Activated naive CD4-positive, alpha-beta T cell treated with anti-CD3 and anti-CD28 coated beads for 36 hours (primary cell): ENCODE measurements at regions of chr19 and their contacts with region 1.

Region 1: DNA sequence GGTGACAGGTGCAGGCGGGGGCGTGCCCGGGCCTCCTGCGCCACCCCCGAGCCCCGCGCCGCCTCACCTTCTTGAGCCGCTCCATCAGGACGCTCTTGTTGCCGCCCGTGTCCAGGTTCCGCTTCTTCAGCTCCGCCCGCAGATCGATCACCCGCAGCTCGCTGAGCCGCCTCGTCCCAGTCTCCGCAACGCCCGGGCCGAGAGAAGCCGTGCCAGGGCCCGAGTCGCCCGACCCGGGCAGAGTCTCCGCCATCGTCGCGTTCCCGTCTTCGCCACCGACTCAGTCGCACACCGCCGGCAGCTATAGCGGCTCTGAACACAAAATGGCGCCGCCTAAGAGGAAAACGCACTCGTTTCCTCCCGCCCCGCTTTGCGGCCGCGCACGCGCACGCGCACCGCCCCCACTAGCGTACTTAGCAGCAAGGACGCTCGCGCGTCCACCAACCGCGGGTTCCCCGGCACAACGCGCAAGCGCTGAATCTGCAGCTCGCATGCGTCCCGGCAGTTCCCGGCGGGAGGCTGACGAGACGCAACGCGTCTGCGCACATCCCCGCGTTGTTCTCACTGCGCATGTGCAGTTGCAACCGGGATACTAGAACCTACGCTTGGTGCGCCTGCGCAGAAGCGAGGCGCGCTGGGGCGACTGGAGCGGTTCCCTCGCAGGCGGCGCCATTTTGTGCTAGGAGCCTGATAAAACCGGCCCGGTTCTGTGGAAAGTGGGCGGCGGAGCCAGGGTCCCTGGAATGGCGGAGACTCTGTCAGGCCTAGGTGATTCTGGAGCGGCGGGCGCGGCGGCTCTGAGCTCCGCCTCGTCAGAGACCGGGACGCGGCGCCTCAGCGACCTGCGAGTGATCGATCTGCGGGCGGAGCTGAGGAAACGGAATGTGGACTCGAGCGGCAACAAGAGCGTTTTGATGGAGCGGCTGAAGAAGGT is at the starts of genes SAFB and SAFB2:
- DNase-seq: peak; percentile 99
- H3K4me3 Mint-ChIP-seq: peak within 1 kb of the TSS; percentile 100
- H3K27ac Mint-ChIP-seq: peak within 1 kb of the TSS; percentile 99
- H3K4me1 Mint-ChIP-seq: peaks cover 68% of the 10 kb centered on the region
- H3K27me3 Mint-ChIP-seq: no peaks in the 10 kb centered on the region
- total RNA-seq, gene SAFB: 120 to 129 TPM
- total RNA-seq, gene SAFB2: 108 to 118 TPM

Region 2: GRCh38 chr19:4909897-4910593 is 712.7 kb before region 1 on chr19:
- CTCF ChIA-PET with region 1: no interaction called
- intact Hi-C with region 1: loop called (anchors 5 kb)
- DNase-seq: peak; percentile 97
- H3K4me3 Mint-ChIP-seq: peak overlapping the region; percentile 85
- H3K27ac Mint-ChIP-seq: peak overlapping the region; percentile 86
- H3K4me1 Mint-ChIP-seq: peaks cover 53% of the 10 kb centered on the region
- H3K27me3 Mint-ChIP-seq: no peaks in the 10 kb centered on the region

Region 3: DNA sequence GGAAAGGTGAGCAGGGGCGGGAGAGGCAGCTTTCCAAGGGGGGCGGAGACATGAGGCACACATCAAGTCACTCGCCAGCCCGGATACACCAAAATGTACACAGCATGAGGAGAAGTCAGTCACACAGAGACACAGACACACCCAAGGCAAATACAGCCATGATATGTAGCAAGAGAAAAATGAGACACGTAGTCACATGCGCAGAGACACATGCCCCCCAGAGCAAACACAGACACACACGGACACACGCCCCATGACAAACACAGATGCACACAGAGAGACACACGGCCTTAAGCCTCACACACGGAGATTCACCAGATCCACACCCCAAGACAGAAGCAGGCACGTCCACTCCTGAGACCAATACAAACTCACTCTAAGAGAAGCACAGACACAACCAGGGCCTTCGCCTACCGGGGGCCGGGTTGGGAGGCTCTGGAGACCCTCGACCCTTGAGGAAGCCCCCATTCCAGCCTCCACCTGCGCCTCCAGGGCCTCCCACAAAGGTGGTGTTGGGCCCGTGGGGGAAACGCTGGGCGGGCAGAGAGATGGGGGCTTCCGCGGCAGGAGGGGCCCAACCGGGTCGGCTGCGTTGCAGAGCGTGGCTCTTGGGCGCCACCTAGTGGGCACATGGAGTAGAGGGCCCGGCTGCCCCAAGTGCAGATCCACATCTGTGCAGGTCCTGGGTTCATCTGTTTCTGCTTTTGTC is 44.8 kb before region 1 on chr19:
- CTCF ChIA-PET with region 1: no interaction called
- intact Hi-C with region 1: no loop called
- DNase-seq: peak; percentile 73
- H3K4me3 Mint-ChIP-seq: no peak overlapping the region
- H3K27ac Mint-ChIP-seq: no peak overlapping the region
- H3K4me1 Mint-ChIP-seq: peaks cover 5% of the 10 kb centered on the region
- H3K27me3 Mint-ChIP-seq: no peaks in the 10 kb centered on the region

Region 4: DNA sequence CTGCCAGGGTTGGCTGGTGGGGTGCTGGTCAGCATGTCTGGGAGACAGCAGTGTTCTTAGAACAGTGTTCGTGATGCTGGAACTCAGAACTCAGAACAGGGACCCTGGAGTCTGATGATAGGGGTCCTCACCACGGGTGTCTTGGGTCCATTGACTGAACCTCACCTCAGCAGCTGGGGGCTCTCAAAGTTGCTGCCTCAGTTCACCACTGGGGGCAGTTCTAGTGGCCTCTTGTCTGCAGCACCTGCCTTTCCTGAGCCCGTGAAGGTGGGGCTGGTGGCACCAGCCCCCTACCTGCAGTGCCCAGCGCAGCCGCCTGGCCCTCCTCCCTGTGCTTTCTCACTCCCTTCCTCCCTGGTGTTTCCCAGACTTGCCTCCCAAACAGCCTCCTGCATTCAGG is 28.6 kb after region 1 on chr19:
- CTCF ChIA-PET with region 1: no interaction called
- intact Hi-C with region 1: no loop called
- DNase-seq: no peak
- H3K4me3 Mint-ChIP-seq: no peak overlapping the region
- H3K27ac Mint-ChIP-seq: no peak overlapping the region
- H3K4me1 Mint-ChIP-seq: no peaks in the 10 kb centered on the region
- H3K27me3 Mint-ChIP-seq: no peaks in the 10 kb centered on the region

Region 5: DNA sequence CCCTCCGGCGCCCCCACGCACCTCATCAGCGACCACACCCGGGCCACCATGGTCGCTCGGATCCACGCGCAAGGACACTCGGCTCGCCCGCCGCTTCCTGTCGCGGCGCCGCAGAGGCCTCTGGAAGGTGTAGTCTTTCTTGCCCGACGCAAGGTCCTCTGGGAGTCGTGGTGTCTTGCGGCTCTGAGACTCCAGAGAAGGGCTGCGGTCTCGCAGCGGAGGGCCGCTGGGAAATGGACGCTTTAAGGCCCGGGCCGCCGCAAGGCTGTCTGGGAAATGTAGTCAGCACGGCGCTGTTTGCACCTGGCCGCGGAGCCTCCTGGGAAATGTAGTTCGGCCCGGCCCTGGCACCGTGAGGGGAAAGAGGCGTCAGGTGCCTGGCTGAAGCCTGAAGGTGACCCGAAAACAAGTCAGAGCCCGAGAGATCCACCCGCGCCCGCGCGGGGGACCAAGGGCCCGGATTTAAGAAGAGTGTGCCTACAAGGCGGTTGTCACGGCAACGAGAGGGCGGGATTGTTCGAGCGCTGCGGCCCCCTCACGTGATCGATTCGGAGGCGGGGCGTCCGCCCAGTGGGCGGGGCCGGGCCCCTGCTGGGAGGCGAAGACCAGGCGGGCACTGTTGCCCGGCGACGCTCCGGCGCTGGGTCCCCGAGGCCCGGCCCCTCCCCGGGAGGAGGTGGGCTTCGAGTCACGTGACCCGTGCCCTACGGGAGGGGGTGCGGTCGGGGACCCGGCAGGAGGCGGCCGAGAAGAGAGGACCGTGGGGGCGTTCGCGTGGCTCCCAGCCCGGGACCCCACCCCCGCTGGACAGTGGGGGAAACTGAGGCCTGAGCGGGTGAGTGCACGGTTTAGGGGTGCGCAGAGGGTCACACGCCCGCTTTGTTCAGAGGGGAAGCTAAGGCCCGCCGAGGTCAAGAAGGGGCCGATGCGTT is 58.0 kb after region 1 on chr19 and contains the starts of genes HSD11B1L and MICOS13:
- CTCF ChIA-PET with region 1: interaction called, 5 read pairs
- intact Hi-C with region 1: loop called (anchors 1 kb)
- DNase-seq: peak; percentile 99
- H3K4me3 Mint-ChIP-seq: peak within 1 kb of the TSS; percentile 98
- H3K27ac Mint-ChIP-seq: peak within 1 kb of the TSS; percentile 91
- H3K4me1 Mint-ChIP-seq: peaks cover 20% of the 10 kb centered on the region
- H3K27me3 Mint-ChIP-seq: no peaks in the 10 kb centered on the region
- total RNA-seq, gene HSD11B1L: 2.6 to 3.0 TPM
- total RNA-seq, gene MICOS13: 43.3 to 44.8 TPM

Region 6: DNA sequence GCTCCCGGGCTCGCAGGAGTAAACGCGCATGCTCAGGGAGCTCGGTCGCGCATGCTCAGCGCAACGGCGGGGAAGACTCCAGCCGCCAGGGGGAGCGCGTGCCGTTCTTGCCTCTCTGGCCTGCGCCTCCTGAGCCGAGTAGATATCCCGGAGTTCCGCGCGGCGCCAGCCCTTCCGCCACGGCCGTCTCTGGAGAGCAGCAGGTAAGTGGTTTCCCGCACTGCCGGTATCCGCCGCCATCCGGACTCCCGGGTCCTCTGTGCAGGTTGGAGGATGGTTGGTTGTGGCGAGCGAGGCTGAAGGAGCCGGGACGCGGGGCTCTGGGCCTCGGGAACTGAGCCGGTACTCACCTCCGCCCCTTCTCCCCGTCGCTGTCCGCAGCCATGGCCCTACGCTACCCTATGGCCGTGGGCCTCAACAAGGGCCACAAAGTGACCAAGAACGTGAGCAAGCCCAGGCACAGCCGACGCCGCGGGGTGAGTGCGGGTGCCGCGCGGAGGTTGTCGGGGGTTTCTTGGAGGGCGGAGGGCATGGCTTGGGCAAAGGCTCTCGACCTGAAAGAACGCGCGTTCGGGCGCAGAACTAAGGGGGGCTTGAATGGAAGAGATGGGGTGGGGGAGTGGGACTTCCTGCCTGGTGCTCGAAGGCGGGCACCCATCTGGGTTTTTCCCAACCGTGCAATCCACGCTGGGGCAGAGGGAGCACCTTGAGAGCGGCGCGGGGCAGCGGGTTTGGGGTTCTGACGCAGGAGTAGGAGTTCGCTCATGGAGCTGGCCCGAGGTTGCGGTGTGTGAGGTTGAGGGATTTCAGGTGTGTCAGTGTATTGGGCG is 67.6 kb after region 1 on chr19 and contains the start of gene RPL36:
- CTCF ChIA-PET with region 1: interaction called, 12 read pairs
- intact Hi-C with region 1: loop called (anchors 1 kb)
- DNase-seq: peak; percentile 100
- H3K4me3 Mint-ChIP-seq: peak within 1 kb of the TSS; percentile 98
- H3K27ac Mint-ChIP-seq: peak within 1 kb of the TSS; percentile 96
- H3K4me1 Mint-ChIP-seq: peaks cover 22% of the 10 kb centered on the region
- H3K27me3 Mint-ChIP-seq: no peaks in the 10 kb centered on the region
- total RNA-seq, gene RPL36: 1,916 to 2,003 TPM

Region 7: GRCh38 chr19:5719961-5720790 is 97.4 kb after region 1 on chr19 and contains the starts of genes CATSPERD and LONP1:
- CTCF ChIA-PET with region 1: no interaction called
- intact Hi-C with region 1: loop called (anchors 1 kb)
- DNase-seq: peak; percentile 99
- H3K4me3 Mint-ChIP-seq: peak within 1 kb of the TSS; percentile 89
- H3K27ac Mint-ChIP-seq: peak within 1 kb of the TSS; percentile 98
- H3K4me1 Mint-ChIP-seq: peaks cover 33% of the 10 kb centered on the region
- H3K27me3 Mint-ChIP-seq: no peaks in the 10 kb centered on the region
- total RNA-seq, gene CATSPERD: not detected
- total RNA-seq, gene LONP1: 223 to 229 TPM

Region 8: DNA sequence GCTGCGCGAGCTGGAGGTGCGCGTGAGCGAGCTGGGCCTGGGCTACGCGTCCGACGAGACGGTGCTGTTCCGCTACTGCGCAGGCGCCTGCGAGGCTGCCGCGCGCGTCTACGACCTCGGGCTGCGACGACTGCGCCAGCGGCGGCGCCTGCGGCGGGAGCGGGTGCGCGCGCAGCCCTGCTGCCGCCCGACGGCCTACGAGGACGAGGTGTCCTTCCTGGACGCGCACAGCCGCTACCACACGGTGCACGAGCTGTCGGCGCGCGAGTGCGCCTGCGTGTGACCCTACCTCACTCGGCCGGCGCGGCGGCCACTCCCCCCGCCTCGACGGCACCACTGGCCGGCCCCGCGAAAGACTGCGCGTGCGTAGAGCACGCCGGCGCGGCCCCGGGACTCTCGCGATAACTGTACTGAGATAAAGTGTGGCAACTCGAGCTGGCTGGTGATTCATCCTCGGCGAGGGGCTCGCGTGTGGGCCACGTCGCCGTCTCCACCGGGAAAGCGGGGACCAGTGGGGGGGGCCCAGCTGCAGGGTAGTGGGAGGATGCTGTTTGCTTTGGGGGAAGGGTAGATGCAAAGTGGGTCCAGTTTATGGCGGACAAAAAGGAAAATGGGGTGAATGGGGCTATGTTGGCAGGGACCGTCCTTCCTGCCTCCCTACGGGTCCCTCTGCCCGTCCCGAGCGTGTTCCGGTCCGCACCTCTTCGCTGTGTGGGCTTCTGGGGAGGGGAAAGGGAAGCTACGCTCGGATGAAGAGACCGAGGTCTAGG is 205.3 kb after region 1 on chr19:
- CTCF ChIA-PET with region 1: no interaction called
- intact Hi-C with region 1: loop called (anchors 1 kb)
- DNase-seq: peak; percentile 96
- H3K4me3 Mint-ChIP-seq: peak overlapping the region; percentile 99
- H3K27ac Mint-ChIP-seq: peak overlapping the region; percentile 96
- H3K4me1 Mint-ChIP-seq: peaks cover 9% of the 10 kb centered on the region
- H3K27me3 Mint-ChIP-seq: no peaks in the 10 kb centered on the region

Region 9: GRCh38 chr19:5977785-5978605 is 355.3 kb after region 1 on chr19 and contains the start of gene RANBP3:
- CTCF ChIA-PET with region 1: no interaction called
- intact Hi-C with region 1: loop called (anchors 10 kb)
- DNase-seq: peak; percentile 98
- H3K4me3 Mint-ChIP-seq: peak within 1 kb of the TSS; percentile 98
- H3K27ac Mint-ChIP-seq: peak within 1 kb of the TSS; percentile 95
- H3K4me1 Mint-ChIP-seq: peaks cover 59% of the 10 kb centered on the region
- H3K27me3 Mint-ChIP-seq: no peaks in the 10 kb centered on the region
- total RNA-seq, gene RANBP3: 77.9 to 80.5 TPM